ENCODE measurements at regions of chr11 and their contacts with region 1.

Region 1: DNA sequence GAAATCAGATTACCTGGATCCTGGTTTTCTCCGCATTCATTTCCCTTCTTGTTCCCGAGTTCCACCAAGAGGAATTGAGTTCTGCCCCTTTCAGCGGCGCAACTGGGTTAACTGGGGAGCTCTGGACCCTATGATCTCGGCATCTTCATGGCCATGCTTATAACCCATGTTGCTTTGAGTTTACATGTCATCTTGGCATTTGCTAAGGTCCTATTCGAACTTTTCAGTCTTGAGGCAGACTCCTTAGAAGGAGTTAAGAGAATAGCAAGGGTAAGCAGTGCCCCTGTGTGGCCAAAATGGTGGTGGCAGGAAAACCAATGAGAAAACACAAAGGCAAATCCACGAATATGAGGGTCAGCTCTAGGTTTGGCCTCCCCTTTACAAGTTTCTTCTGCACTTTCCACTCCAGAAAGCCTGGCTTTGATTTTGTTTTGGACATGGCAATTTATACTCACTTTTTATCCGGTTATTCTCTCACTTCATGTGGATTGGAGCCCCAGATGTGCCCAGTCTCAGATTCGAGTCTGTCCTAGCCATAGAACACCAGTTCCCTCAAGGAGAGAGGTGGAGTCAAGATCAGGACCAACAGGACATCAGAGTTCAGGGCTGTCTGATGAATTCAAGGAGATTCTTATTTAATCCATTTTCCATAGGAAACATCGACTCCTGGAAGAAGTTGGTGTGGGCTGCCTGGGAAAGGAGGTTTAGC is 55.3 kb upstream of the FBXO3 start:
- DNase-seq: peak; percentile 74
- ATAC-seq: peak; percentile 97
- H3K4me3 ChIP-seq: peak overlapping the region; percentile 36
- H3K27ac ChIP-seq: no peak overlapping the region
- H3K4me1 ChIP-seq: no peaks in the 10 kb centered on the region
- H3K27me3 ChIP-seq: peaks cover 44% of the 10 kb centered on the region
- CTCF ChIP-seq: peak; percentile 85
- POLR2A ChIP-seq: no peak
- RAD21 ChIP-seq: peak; percentile 90

Region 2: DNA sequence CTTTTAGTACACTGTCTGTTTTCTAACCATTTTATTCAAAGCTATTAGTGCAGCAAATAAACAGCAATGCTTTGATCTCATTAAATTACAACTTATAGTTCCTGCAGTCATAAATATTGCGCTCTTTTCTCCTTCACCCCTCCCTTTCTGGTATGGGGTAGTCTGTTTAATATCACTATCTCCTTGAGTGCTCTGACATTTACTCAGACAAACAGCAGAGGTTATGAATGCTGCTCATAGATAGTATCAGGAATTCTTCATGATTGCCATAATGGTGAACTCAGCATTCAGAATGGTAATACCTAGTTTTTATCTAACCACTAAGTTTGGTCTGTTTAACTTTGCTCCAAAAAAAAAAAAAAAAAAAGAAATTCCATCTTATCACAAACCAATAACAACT is 1158.5 kb before region 1 on chr11:
- CTCF ChIA-PET with region 1: no interaction called
- POLR2A ChIA-PET with region 1: no interaction called
- dilution Hi-C with region 1: no loop called
- in situ Hi-C with region 1: no loop called
- intact Hi-C with region 1: no loop called
- DNase-seq: no peak
- ATAC-seq: no peak
- H3K4me3 ChIP-seq: no peak overlapping the region
- H3K27ac ChIP-seq: no peak overlapping the region
- H3K4me1 ChIP-seq: no peaks in the 10 kb centered on the region
- H3K27me3 ChIP-seq: no peaks in the 10 kb centered on the region
- CTCF ChIP-seq: no peak
- POLR2A ChIP-seq: no peak
- RAD21 ChIP-seq: no peak

Region 3: DNA sequence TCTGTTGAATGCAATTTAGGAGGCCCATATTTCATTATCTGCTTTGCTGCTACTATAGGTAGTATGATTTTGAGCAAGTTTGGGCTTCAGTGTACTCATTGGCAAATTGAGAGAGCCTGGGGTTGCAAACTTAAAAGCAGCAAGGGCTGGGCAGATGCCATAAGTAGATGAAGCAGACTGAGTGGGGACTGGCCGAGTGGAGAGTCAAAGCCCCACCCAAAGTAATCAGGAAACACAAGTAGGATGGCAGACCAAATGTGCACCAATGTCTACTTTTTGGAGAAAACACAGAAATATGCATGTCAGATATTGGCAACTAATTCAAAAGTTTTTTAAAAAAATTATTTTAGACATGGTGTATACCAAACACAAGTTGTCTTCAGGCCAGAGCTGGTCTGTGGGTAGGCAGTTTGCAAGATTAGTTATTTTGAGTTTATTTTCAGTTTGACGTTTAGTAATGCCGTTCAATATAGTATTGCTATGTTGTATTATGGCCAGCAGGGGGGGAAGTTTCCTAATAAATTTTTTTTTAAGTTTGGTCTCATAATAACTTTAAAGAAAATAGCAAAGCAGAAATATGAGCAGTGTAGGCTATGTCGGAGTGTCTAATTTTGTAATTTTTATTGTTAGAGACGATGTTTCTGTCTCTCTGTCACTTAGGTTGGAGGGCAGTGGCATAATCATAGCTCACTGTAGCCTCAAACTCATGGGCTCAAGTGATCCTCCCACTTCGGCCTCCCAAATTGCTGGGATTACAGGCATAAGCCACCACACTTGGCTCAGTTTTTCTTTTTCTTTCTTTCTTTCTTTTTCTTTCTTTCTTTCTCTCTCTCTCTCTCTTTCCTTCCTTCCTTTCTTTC is 467.3 kb before region 1 on chr11:
- CTCF ChIA-PET with region 1: interaction called, 3 read pairs
- POLR2A ChIA-PET with region 1: no interaction called
- dilution Hi-C with region 1: no loop called
- in situ Hi-C with region 1: loop called (anchors 10 kb)
- intact Hi-C with region 1: loop called (anchors 1 kb)
- DNase-seq: peak; percentile 56
- ATAC-seq: peak; percentile 74
- H3K4me3 ChIP-seq: no peak overlapping the region
- H3K27ac ChIP-seq: no peak overlapping the region
- H3K4me1 ChIP-seq: no peaks in the 10 kb centered on the region; the same call in 1 of the 2 replicates
- H3K27me3 ChIP-seq: no peaks in the 10 kb centered on the region
- CTCF ChIP-seq: peak; percentile 76
- POLR2A ChIP-seq: no peak
- RAD21 ChIP-seq: peak; percentile 66

Region 4: DNA sequence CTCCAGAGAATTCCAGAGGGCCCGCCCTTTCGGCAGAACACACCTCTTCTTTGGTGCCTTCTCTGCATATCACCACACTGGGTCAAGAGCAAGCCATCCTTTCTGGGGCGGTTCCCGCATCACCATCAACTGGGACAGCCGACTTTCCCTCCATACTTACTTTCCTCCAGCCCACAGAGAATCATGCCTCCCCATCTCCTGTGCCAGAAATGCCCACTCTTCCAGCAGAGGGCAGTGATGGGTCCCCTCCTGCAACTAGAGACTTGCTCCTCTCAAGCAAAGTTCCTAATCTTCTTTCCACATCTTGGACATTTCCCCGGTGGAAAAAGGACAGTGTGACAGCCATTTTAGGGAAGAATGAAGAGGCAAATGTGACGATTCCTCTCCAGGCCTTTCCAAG is 286.7 kb before region 1 on chr11:
- CTCF ChIA-PET with region 1: no interaction called
- POLR2A ChIA-PET with region 1: no interaction called
- dilution Hi-C with region 1: no loop called
- in situ Hi-C with region 1: no loop called
- intact Hi-C with region 1: loop called (anchors 5 kb)
- DNase-seq: peak; percentile 40
- ATAC-seq: peak; percentile 59; the same call in 1 of the 2 replicates
- H3K4me3 ChIP-seq: no peak overlapping the region
- H3K27ac ChIP-seq: no peak overlapping the region
- H3K4me1 ChIP-seq: peaks cover 2% of the 10 kb centered on the region; the same call in 1 of the 2 replicates
- H3K27me3 ChIP-seq: no peaks in the 10 kb centered on the region
- CTCF ChIP-seq: peak; percentile 61
- POLR2A ChIP-seq: no peak
- RAD21 ChIP-seq: peak; percentile 66

Region 5: DNA sequence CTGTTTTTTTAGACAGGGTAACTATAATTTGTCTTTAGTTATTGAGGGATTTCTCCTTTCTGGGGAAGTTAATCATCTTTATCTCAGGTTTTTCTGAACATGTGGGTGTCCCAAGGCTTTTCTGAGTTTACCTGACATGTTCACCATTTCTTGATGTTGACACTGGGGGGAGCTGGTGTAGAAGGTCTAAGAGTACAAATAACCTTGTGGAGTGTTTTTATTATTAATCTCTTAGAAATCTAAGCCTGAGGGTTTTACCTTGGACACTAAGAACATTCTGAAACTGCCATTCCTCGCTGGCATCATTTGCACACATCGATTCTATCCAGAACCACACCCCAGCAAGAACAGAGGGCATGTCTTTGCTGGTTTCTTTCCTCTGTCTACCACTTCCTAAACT is 113.4 kb before region 1 on chr11:
- CTCF ChIA-PET with region 1: no interaction called
- POLR2A ChIA-PET with region 1: no interaction called
- dilution Hi-C with region 1: no loop called
- in situ Hi-C with region 1: no loop called
- intact Hi-C with region 1: loop called (anchors 5 kb)
- DNase-seq: no peak
- ATAC-seq: no peak; the same call in 1 of the 2 replicates
- H3K4me3 ChIP-seq: no peak overlapping the region
- H3K27ac ChIP-seq: no peak overlapping the region
- H3K4me1 ChIP-seq: peaks cover 6% of the 10 kb centered on the region
- H3K27me3 ChIP-seq: no peaks in the 10 kb centered on the region
- CTCF ChIP-seq: peak; percentile 50
- POLR2A ChIP-seq: no peak
- RAD21 ChIP-seq: peak; percentile 37

Region 6: DNA sequence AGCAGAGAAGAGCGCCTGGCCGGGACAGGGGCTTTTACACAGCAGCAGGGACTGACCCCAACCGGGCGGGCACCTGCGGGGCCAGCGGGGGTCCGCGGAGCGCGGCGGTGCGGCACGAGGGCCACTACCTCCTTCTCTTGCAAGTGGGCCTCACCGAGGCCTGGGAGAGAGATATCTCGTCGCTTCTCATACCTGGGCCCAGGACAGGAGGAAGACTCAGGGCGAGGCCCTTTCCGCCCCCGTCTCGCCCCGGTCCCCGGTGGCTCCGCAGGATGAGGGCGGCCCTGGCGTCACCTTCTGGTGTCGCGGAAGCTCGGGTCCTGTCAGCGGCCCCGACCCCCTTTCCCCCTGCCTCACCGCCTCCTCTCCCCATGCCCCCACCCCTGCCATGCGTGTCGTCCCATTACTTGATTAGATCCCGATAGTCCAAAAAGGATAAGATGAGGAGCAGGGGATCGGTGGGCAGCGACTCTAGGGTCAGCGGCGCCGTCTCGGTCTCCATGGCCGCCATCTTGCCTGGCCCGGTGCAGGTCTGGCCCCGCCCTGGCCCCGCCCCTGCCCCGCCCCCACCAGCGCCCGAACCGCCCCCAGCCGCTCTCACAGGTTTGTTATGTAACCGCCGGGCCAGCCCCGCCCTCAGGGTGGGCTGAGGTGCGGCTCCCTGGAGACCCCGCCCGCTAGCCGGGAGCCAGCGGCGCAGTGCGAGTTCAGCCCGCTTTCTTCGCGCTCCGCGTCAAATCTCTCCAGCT is 55.4 kb before region 1 on chr11 and contains the start of gene FBXO3:
- CTCF ChIA-PET with region 1: no interaction called
- POLR2A ChIA-PET with region 1: no interaction called
- dilution Hi-C with region 1: no loop called
- in situ Hi-C with region 1: no loop called
- intact Hi-C with region 1: loop called (anchors 2 kb)
- DNase-seq: peak; percentile 58
- ATAC-seq: peak; percentile 92
- H3K4me3 ChIP-seq: peak within 1 kb of the TSS; percentile 82
- H3K27ac ChIP-seq: peak within 1 kb of the TSS; percentile 86
- H3K4me1 ChIP-seq: peaks cover 13% of the 10 kb centered on the region
- H3K27me3 ChIP-seq: no peaks in the 10 kb centered on the region
- CTCF ChIP-seq: no peak
- POLR2A ChIP-seq: peak; percentile 19; the same call in 1 of the 2 replicates
- RAD21 ChIP-seq: no peak
- total RNA-seq, gene FBXO3: 51.1 and 65.3 TPM in 2 replicates

Region 7: DNA sequence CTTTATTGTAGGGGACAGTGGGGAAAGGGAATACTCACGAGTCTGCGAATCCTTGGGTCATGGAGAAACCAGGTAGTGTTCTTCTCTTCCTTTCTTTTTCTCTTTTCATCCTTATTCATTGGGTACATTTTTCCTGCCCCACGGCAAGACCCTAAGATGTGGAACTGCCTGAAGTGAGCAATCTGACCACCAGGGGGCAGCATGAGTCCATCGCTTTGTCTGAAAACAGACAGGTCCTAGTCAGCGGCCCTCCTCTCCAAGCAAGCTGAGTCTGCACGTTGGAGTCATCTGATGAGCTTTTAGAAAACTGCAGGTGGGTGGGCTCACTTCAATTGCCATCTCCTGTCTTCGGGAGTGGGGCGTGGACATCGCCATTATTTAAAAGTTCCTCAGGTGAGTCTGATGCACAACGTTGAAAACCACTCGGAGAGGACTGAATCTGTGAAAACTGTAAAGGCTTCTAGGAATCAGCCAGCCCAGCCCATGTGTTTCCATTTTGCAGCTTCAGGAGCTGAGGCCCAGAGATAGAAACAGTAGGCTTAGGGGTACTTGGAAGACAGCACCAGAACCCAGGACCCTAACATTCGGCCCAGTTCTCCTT is 21.3 kb before region 1 on chr11:
- CTCF ChIA-PET with region 1: interaction called, 6 read pairs
- POLR2A ChIA-PET with region 1: no interaction called
- dilution Hi-C with region 1: no loop called
- in situ Hi-C with region 1: no loop called
- intact Hi-C with region 1: loop called (anchors 1 kb)
- DNase-seq: peak; percentile 81
- ATAC-seq: peak; percentile 98
- H3K4me3 ChIP-seq: no peak overlapping the region
- H3K27ac ChIP-seq: no peak overlapping the region
- H3K4me1 ChIP-seq: no peaks in the 10 kb centered on the region
- H3K27me3 ChIP-seq: peaks cover 12% of the 10 kb centered on the region
- CTCF ChIP-seq: peak; percentile 83
- POLR2A ChIP-seq: no peak
- RAD21 ChIP-seq: peak; percentile 79

Measured in IMR-90 (cell line).